Heart left ventricle (tissue), 16 donors: ENCODE measurements at regions of chr2 and their contacts with region 1.

Region 1: GRCh38 chr2:181407171-181407570 is 50.0 kb upstream of the ITGA4 start:
- DNase-seq: no peak
- ATAC-seq: peak in 3 of 4 donors; percentile 39 to 60 (median 53)
- H3K4me3 ChIP-seq: no peak overlapping the region
- H3K27ac ChIP-seq: peak overlapping the region in 1 of 12 donors; percentile 35
- H3K4me1 ChIP-seq: peaks cover 0 to 17% (median 0%) of the 10 kb centered on the region in 12 donors
- H3K27me3 ChIP-seq: no peaks in the 10 kb centered on the region
- CTCF ChIP-seq: no peak
- POLR2A ChIP-seq: no peak

Region 2: GRCh38 chr2:181275643-181276070 is 131.5 kb before region 1 on chr2:
- intact Hi-C with region 1: loop called in 1 of 10 experiments (anchors 10 kb)
- DNase-seq: peak in 2 of 5 donors; percentile 26 to 33
- ATAC-seq: peak; percentile 62 to 78 (median 77)
- H3K4me3 ChIP-seq: no peak overlapping the region
- H3K27ac ChIP-seq: peak overlapping the region in 1 of 12 donors; percentile 50
- H3K4me1 ChIP-seq: no peaks in the 10 kb centered on the region
- H3K27me3 ChIP-seq: no peaks in the 10 kb centered on the region
- CTCF ChIP-seq: no peak
- POLR2A ChIP-seq: no peak

Region 3: GRCh38 chr2:181361226-181361625 is 45.9 kb before region 1 on chr2:
- intact Hi-C with region 1: loop called in 1 of 10 experiments (anchors 2 kb)
- DNase-seq: no peak
- ATAC-seq: no peak
- H3K4me3 ChIP-seq: no peak overlapping the region
- H3K27ac ChIP-seq: no peak overlapping the region
- H3K4me1 ChIP-seq: peaks cover 0 to 4% (median 0%) of the 10 kb centered on the region in 12 donors
- H3K27me3 ChIP-seq: peaks cover 0 to 4% (median 0%) of the 10 kb centered on the region in 9 donors
- CTCF ChIP-seq: no peak
- POLR2A ChIP-seq: no peak

Region 4: DNA sequence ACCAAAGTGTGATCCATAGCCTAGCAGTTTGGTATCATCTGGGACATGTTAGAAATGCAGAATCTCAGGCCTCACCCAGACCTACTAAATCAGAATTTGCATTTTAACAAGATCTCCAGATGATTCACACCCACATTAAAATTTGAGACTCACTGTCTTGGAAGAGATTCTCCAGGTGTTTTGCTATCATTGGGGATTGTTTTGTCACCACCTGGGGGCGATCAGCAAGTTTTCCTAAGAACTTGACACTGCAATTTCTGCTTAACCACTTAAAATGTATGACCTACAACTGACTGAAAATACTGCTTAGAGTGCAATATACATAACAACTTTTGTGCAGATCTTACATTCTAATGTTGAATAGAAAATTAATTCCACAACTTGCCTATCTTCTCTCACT is 31.1 kb after region 1 on chr2:
- intact Hi-C with region 1: no loop called
- DNase-seq: no peak
- ATAC-seq: no peak
- H3K4me3 ChIP-seq: no peak overlapping the region
- H3K27ac ChIP-seq: no peak overlapping the region
- H3K4me1 ChIP-seq: no peaks in the 10 kb centered on the region
- H3K27me3 ChIP-seq: no peaks in the 10 kb centered on the region
- CTCF ChIP-seq: no peak
- POLR2A ChIP-seq: no peak